Activated naive CD4-positive, alpha-beta T cell treated with anti-CD3 and anti-CD28 coated beads, Interleukin-2, amount 10 ng/mL, durations not matched to agents 7 days and 5 days (primary cell): ENCODE measurements at regions of chr11 and their contacts with region 1.

Region 1: DNA sequence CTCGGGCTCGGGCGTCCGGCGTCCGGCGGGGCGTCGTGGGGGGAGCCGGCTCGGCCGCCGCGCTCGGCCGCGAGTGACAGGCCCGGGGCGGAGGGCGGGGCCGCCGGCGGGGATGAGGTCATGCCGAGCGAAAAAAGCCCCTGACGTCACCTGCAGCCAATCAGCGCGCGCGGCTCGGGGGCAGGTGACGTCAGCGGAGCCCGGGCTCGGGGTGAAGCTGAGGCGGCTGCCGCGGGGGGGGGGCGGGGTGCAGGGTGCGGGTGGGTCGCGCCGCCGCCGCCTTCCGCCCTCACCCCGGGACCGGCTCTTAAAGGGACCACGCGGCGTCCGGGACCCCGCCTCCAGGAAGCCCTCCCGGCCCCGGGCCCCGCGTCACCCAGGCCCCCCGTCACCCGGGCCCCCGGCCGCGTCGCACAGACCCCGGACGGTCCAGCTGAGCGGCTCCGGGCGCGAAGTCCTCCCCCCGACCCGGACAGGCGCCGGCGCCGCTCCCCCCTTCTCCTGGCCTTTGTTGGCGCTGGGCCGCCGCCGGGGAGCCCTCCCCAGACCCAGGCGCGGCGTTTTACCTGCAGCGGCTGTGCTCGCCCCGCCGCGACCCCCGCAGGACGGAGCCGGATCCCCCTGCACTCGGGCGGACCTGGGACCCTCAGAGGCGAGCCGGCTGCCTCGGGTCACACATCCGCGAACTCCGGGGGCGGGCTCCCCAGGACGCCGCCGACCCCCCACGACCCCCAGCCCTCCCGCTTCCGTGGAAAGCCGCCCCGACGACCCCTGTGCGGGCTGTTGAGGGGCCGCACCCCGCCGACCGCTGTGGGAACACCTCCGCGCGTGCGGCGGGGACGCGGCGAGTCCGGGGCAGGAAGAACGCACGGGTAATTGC is at the start of gene DUSP8:
- DNase-seq: peak; percentile 92
- H3K4me3 Mint-ChIP-seq: peak within 1 kb of the TSS; percentile 28
- H3K27ac Mint-ChIP-seq: no peak within 1 kb of the TSS
- H3K4me1 Mint-ChIP-seq: peaks cover 18% of the 10 kb centered on the region
- H3K27me3 Mint-ChIP-seq: peaks cover 67% of the 10 kb centered on the region

Region 2: GRCh38 chr11:1428762-1429316 is 143.6 kb before region 1 on chr11:
- CTCF ChIA-PET with region 1: no interaction called
- DNase-seq: no peak
- H3K4me3 Mint-ChIP-seq: no peak overlapping the region
- H3K27ac Mint-ChIP-seq: no peak overlapping the region
- H3K4me1 Mint-ChIP-seq: no peaks in the 10 kb centered on the region
- H3K27me3 Mint-ChIP-seq: no peaks in the 10 kb centered on the region

Region 3: DNA sequence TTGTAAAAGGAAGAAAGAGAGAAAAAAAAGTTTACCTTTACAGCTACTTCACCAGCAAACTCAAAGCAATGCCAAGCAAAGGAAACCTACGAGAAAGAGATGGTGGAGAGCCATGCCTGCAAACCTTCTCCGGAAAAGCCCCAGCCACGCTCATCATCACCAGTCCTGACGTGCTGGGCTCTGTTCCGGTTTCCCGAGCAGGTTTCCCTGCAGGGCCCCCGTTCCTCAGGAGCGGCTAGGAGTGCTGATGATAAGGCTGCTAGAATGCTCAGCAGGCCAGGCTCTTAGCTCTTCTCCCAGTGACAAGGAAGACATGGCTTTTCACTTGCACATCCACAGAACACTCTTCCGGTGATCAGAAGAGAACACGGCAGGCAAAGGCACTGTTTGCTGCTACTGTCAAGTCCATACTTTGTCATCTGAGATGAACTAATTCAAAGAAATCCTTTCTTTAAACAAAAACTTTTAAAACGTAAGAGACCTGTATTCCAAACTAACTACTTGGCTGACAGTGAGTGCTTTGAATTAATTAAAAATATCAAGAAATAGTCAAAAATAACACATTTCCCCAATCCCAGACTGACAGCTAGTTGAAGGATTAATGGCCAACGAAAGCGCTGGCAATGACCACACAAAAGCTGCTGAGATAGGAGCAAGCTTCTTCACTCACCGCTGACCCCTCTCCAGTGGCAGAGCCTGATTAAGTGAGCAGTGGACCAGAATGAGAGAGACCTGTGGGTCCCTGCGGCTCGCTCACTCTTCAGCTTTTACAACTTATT is 36.2 kb before region 1 on chr11:
- CTCF ChIA-PET with region 1: interaction called, 13 read pairs
- DNase-seq: no peak
- H3K4me3 Mint-ChIP-seq: no peak overlapping the region
- H3K27ac Mint-ChIP-seq: no peak overlapping the region
- H3K4me1 Mint-ChIP-seq: peaks cover 20% of the 10 kb centered on the region
- H3K27me3 Mint-ChIP-seq: peaks cover 30% of the 10 kb centered on the region

Region 4: GRCh38 chr11:1546536-1547400 is 25.7 kb before region 1 on chr11:
- CTCF ChIA-PET with region 1: interaction called, 51 read pairs
- DNase-seq: peak; percentile 52
- H3K4me3 Mint-ChIP-seq: peak overlapping the region; percentile 21
- H3K27ac Mint-ChIP-seq: no peak overlapping the region
- H3K4me1 Mint-ChIP-seq: peaks cover 3% of the 10 kb centered on the region
- H3K27me3 Mint-ChIP-seq: peaks cover 73% of the 10 kb centered on the region

Region 5: DNA sequence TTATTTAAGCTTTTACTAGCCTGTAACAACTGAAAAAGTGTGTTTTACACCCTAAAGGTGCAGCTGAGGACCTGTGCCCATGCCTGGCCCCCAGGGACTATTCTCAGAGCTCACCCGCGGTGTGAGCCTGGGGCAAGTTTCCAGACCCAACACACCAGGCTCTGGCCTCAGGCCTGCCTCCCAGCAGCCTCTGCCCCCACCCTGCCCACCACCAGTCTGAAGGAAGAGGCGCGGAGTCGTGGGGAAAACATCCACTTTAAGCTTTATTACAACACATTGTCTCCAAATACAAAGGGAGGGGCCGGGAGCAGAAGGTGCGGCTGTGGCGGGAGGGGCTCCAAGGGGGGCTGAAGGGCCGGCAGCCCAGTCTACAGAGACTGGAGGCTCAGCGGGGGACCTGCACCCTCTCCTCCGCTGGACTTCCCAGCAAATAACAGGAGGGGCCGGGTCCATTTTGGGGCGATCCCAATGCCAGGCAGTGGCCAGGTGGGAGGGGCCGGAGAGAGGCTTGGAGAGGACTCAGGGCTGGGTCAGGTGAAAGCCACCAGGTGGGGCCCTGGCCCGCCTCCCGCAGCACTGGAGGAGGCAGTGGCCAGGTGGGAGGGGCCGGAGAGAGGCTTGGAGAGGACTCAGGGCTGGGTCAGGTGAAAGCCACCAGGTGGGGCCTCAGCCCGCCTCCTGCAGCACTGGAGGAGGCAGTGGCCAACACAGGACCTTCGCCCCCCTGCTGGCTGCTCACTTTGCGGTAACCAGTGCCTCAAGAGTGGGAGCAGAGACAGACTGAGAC is 18.4 kb before region 1 on chr11:
- CTCF ChIA-PET with region 1: interaction called, 51 read pairs
- DNase-seq: no peak
- H3K4me3 Mint-ChIP-seq: no peak overlapping the region
- H3K27ac Mint-ChIP-seq: no peak overlapping the region
- H3K4me1 Mint-ChIP-seq: no peaks in the 10 kb centered on the region
- H3K27me3 Mint-ChIP-seq: peaks cover 27% of the 10 kb centered on the region

Region 6: DNA sequence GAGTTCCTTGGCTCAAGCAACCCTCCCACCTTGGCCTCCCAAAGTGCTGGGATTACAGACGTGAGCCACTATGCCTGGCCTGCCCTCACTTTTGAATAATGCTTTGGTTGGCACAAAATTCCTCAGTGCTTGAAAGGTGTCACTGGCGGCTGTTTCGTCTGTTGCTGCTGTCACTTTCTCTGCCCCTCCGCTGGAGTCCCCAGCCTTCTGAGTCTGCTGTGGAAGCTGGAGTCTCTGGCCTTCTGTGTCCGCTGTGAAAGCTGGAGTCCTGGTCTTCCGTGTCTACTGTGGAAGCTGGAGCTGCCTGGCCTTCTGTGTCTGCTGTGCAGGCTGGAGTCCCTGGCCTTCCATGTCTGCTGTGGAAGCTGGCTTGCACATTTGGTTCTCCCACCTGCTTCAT is 17.6 kb after region 1 on chr11:
- CTCF ChIA-PET with region 1: interaction called, 14 read pairs
- DNase-seq: no peak
- H3K4me3 Mint-ChIP-seq: no peak overlapping the region
- H3K27ac Mint-ChIP-seq: peak overlapping the region; percentile 64
- H3K4me1 Mint-ChIP-seq: peaks cover 14% of the 10 kb centered on the region
- H3K27me3 Mint-ChIP-seq: peaks cover 47% of the 10 kb centered on the region

Region 7: GRCh38 chr11:1782831-1783724 is 210.6 kb after region 1 on chr11:
- CTCF ChIA-PET with region 1: no interaction called
- DNase-seq: no peak
- H3K4me3 Mint-ChIP-seq: no peak overlapping the region
- H3K27ac Mint-ChIP-seq: no peak overlapping the region
- H3K4me1 Mint-ChIP-seq: no peaks in the 10 kb centered on the region
- H3K27me3 Mint-ChIP-seq: peaks cover 51% of the 10 kb centered on the region